ENCODE measurements at regions of chr6 and their contacts with region 1.

Region 1: DNA sequence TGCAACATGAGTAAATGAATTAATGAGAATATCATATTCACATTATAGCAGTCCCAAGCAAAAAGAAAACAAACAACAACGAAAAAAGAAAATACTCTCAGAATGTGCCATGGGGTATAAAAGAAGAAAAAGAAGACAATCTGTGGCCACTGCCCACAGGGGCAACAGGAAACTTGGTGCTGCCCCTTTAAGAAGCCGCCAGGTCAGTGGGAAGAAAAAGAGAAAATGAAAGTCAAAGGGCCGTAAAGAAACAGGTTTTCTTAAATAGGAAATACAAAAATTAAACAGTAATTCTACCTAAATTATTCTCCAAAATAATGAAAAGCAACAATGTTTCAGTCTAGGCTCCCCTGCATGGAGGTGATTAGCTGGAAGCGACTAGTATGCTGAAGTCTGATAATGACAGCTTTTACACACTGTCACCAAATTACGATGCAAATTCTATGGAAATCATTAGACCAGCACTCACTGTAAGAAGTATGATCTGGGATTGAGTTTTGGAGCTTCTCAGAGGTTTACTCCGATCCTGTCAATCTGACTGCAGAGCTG is 23.6 kb downstream of the GMDS start:
- DNase-seq: peak; percentile 37
- ATAC-seq: peak; percentile 73
- H3K4me3 Mint-ChIP-seq: peak overlapping the region; percentile 79
- H3K27ac Mint-ChIP-seq: peak overlapping the region; percentile 92
- H3K4me1 Mint-ChIP-seq: peaks cover 18% of the 10 kb centered on the region
- H3K27me3 Mint-ChIP-seq: no peaks in the 10 kb centered on the region

Region 2: GRCh38 chr6:2209226-2209809 is 12.5 kb before region 1 on chr6:
- CTCF ChIA-PET with region 1: interaction called, 18 read pairs
- POLR2A ChIA-PET with region 1: interaction called, 8 read pairs
- DNase-seq: peak; percentile 58
- ATAC-seq: peak; percentile 82
- H3K4me3 Mint-ChIP-seq: no peak overlapping the region
- H3K27ac Mint-ChIP-seq: no peak overlapping the region
- H3K4me1 Mint-ChIP-seq: no peaks in the 10 kb centered on the region
- H3K27me3 Mint-ChIP-seq: peaks cover 1% of the 10 kb centered on the region

Region 3: GRCh38 chr6:2353412-2354137 is 131.8 kb after region 1 on chr6:
- CTCF ChIA-PET with region 1: interaction called, 11 read pairs
- POLR2A ChIA-PET with region 1: no interaction called
- DNase-seq: peak; percentile 68
- ATAC-seq: no peak
- H3K4me3 Mint-ChIP-seq: no peak overlapping the region
- H3K27ac Mint-ChIP-seq: no peak overlapping the region
- H3K4me1 Mint-ChIP-seq: no peaks in the 10 kb centered on the region
- H3K27me3 Mint-ChIP-seq: no peaks in the 10 kb centered on the region

Measured in activated CD8-positive, alpha-beta T cell treated with anti-CD3 and anti-CD28 coated beads, Interleukin-2, amount 10 ng/mL, durations not matched to agents 7 days and 5 days (primary cell).